ENCODE measurements at regions of chr3 and their contacts with region 1.

Region 1: DNA sequence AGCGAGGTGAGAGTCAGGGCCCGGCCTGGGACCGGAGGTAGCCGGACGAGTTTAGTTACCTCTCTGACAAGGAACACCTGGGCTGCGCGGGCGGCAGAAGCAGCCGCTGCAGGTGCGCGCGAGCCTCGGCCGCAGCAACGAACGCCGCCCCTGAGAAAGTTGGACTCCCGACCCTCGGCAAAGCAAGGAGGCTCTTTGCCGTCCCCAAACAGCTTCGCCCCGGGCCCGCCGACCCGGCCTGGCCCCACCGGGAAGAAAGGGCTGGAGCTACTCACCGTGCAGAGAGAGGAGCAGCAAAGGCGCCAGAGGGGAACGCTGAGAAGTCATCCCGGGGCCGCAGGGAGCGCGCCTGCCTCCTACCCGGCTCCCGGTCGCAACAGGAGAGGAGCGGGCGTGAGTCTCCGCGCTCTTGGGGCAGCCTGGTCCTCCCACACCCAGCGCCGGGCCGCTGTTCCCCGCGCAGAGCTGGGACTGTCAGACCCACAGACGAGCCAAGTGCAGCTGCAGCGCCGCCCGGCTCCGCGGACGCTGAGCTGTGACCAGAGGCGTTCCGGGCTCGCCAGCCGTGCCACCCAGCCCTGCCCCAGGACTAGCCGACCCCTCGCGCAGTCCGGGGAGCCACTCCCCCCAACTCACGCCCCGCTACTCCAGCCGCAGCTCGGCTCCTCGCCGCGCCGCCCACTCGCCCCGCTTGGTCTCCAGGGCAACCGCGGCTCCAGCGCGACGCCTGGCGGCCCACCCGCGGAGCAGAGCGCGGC is at the start of gene IGSF11:
- DNase-seq: no peak
- ATAC-seq: peak; percentile 97
- H3K4me3 ChIP-seq: peak within 1 kb of the TSS; percentile 50 to 54
- H3K27ac ChIP-seq: no peak within 1 kb of the TSS
- H3K4me1 ChIP-seq: peaks cover 3% of the 10 kb centered on the region; the same call in 1 of the 2 replicates
- H3K27me3 ChIP-seq: peaks cover 42% of the 10 kb centered on the region
- CTCF ChIP-seq: peak; percentile 97
- total RNA-seq, gene IGSF11: 0.33 TPM

Region 2: DNA sequence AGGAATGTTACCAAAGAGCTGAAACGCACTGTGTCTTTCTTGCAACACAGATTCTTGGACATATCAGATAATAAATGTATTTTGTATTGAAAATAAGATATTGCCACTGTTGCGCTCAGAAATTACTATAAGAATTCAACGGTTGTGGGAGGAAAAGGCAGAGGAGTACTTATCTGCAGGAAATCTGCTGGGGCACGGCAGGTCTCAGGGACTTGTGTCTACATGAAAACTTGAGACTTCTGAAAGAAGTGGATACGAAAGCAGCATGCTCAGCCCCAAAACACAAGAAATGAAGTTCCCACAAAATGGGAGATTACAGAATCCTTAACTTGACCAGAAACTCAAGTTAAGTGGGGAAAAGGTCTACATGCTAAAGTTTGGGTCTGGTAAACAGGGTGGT is 86.3 kb before region 1 on chr3:
- CTCF ChIA-PET with region 1: interaction called, 11 read pairs
- POLR2A ChIA-PET with region 1: no interaction called
- in situ Hi-C with region 1: no loop called
- intact Hi-C with region 1: no loop called
- DNase-seq: no peak
- ATAC-seq: no peak
- H3K4me3 ChIP-seq: no peak overlapping the region
- H3K27ac ChIP-seq: no peak overlapping the region
- H3K4me1 ChIP-seq: no peaks in the 10 kb centered on the region
- H3K27me3 ChIP-seq: no peaks in the 10 kb centered on the region
- CTCF ChIP-seq: no peak